ENCODE measurements at regions of chr3 and their contacts with region 1.

Region 1: GRCh38 chr3:184250167-184250828 is 826 bp downstream of the EEF1AKMT4 start:
- DNase-seq: peak; percentile 89 to 93
- ATAC-seq: peak; percentile 91
- H3K4me3 ChIP-seq: peak overlapping the region; percentile 49 to 70
- H3K27ac ChIP-seq: no peak overlapping the region
- H3K4me1 ChIP-seq: no peaks in the 10 kb centered on the region
- H3K27me3 ChIP-seq: no peaks in the 10 kb centered on the region

Region 2: DNA sequence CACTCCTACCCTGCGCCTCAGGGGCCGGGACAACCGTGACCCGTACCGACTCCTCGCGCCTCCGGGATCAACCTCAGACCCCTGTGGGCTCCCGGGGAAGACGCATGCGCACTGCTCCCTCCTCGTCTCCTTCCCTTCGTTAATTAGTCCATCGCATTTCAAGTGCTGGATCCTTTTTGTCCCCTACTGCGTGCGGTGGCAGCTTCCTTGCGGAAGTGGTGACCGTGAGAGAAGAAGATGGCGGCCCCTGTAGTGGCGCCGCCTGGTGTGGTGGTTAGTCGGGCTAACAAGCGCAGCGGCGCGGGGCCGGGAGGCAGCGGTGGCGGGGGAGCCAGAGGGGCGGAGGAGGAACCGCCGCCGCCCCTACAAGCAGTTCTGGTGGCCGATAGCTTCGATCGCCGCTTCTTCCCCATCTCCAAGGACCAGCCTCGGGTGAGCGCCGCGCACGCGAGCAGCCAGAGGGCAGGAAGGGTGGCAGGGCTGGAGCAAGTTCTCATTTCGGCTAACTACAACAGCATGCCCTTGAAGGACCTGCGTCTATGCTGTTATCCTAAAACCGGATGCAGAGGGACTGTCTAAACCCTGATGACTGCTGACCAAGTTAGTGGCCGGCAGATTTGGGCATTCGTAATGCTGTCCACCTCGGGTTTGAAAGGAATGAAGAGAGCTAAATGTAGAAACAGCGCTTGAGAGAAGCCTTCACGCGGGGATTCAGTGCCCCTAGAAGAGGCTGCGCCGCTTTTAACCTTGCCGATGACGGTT is 115.0 kb before region 1 on chr3 and contains the start of gene EIF2B5:
- intact Hi-C with region 1: loop called (anchors 1 to 10 kb)
- DNase-seq: peak; percentile 94 to 97
- ATAC-seq: peak; percentile 97
- H3K4me3 ChIP-seq: peak within 1 kb of the TSS; percentile 30 to 75
- H3K27ac ChIP-seq: peak within 1 kb of the TSS; percentile 12 to 31
- H3K4me1 ChIP-seq: no peaks in the 10 kb centered on the region
- H3K27me3 ChIP-seq: no peaks in the 10 kb centered on the region
- total RNA-seq, gene EIF2B5: 32.2 to 32.9 TPM

Region 3: DNA sequence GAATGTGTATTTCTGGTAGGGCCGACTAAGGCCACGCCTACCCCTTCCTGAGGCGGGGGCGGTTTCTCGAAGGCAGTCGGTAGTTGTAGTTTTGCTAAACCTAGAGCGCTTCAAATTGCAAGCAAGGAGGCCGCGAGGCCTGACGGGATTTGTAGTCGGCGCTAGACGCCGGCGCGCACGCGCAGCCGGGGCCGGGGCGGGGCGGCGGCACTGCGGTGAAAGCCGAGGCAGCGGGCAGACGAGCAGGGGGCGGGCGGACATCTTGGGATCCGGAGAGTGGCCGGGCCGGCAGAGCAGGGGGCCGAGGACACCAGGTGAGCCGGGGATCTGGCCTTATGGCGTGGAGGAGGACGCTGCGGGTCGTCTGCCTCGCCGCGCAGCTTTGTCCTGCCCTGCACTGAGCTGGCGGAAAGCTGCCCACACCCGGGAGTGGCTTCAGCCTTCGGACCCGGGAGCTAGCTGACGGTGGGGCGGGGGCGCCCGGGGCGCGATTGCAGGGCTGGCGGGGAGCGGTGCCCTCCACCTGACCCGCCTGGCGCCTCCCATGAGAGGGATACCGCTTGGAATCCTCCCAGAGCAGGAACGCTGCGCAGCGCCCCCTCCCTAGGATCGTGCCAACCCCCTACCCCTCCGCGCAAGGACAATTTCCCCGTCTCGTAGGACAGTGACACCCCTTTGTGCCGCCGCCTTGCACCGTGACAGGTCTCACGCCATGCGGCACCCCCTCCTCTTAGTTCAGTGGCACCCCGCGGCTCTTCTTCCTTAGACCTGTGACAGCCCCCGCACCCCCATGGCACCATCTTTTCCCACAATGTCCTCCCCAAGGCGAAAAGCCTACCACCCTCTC is 75.4 kb before region 1 on chr3 and contains the start of gene AP2M1:
- intact Hi-C with region 1: loop called in 1 of 2 experiments (anchors 5 kb)
- DNase-seq: peak; percentile 99
- ATAC-seq: peak; percentile 96
- H3K4me3 ChIP-seq: peak within 1 kb of the TSS; percentile 76 to 93
- H3K27ac ChIP-seq: peak within 1 kb of the TSS in 1 of 2 donors; percentile 74
- H3K4me1 ChIP-seq: no peaks in the 10 kb centered on the region
- H3K27me3 ChIP-seq: no peaks in the 10 kb centered on the region
- total RNA-seq, gene AP2M1: 249 to 250 TPM

Region 4: DNA sequence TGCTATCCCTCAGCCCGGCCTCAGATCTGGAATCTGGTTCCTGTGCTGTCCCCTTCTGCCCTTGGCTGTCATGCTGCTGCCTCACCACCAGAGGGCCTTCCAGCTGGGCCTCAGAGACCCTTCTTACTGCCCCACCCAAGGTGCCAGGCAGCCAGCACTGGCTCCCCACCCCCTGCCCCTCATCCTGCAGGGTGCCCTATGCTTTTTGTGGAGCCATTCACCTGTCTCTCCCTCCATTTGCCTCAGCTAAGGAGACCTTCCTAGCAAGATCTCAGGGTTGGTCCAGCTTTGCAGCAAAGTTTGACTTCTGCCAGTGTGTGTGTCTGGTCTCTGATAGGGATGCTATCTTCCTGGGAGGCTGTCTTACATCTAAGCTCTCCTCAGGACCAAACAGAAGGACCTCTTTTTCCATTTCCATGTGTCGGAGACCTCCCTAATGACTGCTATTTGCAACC is 22.8 kb before region 1 on chr3:
- intact Hi-C with region 1: loop called in 1 of 2 experiments (anchors 2 kb)
- DNase-seq: no peak
- ATAC-seq: no peak
- H3K4me3 ChIP-seq: no peak overlapping the region
- H3K27ac ChIP-seq: no peak overlapping the region
- H3K4me1 ChIP-seq: no peaks in the 10 kb centered on the region
- H3K27me3 ChIP-seq: no peaks in the 10 kb centered on the region

Region 5: GRCh38 chr3:184371570-184372018 is 121.3 kb after region 1 on chr3:
- intact Hi-C with region 1: no loop called
- DNase-seq: peak; percentile 87
- ATAC-seq: peak; percentile 91
- H3K4me3 ChIP-seq: no peak overlapping the region
- H3K27ac ChIP-seq: no peak overlapping the region
- H3K4me1 ChIP-seq: peaks cover 3 to 4% of the 10 kb centered on the region in 2 donors
- H3K27me3 ChIP-seq: no peaks in the 10 kb centered on the region

Measured in aorta (tissue), 5 donors.